ENCODE measurements at regions of chr17 and their contacts with region 1.

Region 1: GRCh38 chr17:49707608-49708514 is at the start of gene SLC35B1:
- DNase-seq: peak; percentile 100
- ATAC-seq: peak; percentile 99
- total RNA-seq, gene SLC35B1: 61.5 TPM

Region 2: DNA sequence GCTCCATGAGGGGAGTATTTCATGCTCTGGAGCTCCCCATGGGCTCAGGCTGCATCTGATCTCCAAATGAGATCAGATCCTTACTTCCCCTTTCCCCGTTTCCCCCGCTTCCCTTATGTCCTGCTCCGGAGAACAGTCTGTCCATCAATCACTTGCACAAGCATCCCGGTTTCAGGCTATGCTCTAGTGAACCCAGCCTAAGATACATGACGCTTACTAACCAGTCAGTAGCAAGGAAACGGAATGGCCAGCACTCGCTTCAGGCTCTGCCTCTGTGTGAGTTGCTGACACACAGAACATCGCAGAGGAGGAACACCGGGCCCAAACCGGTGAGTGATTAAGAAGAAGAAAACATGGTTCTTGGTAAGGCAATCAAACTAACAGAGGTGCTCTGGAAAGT is 824.7 kb before region 1 on chr17:
- intact Hi-C with region 1: no loop called
- DNase-seq: no peak
- ATAC-seq: no peak

Region 3: GRCh38 chr17:49779739-49780231 is 71.9 kb after region 1 on chr17:
- intact Hi-C with region 1: loop called (anchors 5 kb)
- DNase-seq: no peak
- ATAC-seq: peak; percentile 59

Region 4: DNA sequence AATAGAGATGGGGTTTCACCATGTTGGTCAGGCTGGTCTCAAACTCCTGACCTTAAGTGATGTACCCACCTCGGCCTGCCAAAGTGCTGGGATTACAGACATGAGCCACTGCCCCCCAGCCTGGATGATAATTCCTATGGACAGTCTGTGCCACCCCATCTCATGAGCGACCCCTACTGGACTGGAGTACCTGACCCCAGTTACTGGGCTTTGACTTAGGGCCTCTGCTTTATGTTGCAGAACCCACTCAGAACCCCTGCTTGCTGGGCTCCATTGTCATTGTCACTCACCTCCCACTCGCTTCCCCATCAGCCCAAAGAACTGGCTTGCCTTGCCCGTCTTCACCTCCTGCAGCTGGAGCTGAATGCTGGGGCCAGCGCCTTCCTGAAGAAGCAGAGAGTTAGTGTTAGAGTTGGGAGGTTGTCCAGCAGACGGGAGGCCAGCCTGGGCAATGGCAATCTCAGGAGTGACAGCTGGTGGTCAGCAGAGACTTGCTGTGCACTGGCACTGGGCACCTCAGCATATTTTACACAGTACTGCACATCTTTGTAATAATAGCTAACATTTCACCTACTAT is 136.0 kb after region 1 on chr17:
- intact Hi-C with region 1: loop called (anchors 10 kb)
- DNase-seq: no peak
- ATAC-seq: no peak

Measured in left ventricle myocardium superior (tissue), 1 donor.